ENCODE measurements at regions of chr7 and their contacts with region 1.

Region 1: DNA sequence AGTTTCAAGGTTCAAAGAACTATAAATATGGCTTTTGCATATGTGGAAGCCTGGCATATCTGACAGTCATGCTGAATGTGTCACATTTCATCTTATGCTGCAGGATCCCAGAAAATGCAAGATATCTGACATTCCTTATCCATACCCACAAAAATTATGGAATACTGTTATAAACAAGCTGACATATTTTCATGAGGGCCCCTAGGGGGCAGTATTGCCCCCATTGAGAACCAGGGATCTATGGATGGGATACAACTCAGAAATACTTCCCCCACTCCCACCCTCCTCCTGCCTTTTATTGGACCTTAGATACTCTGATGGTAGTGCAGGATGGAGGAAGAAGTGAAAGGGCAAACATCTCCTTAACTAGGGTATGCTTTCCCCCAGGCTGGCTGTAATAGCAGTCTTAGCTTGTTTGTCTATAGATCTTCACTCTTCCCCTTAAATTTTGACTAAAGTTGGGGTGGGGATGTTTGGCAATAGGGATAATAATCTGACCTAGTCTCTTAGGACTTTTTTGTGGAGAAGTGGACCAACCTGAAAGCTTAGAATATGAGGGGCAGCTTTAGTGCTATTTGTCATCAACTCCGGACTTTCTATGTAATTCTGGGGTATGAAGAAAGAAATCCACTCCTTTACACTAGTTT is 3.5 kb upstream of the GNGT1 start:
- DNase-seq: peak in 1 of 5 donors; percentile 51
- H3K4me3 ChIP-seq: no peak overlapping the region
- H3K27ac ChIP-seq: no peak overlapping the region
- H3K4me1 ChIP-seq: no peaks in the 10 kb centered on the region
- H3K27me3 ChIP-seq: no peaks in the 10 kb centered on the region
- CTCF ChIP-seq: peak; percentile 44 to 57 (median 53)
- EP300 ChIP-seq: no peak
- POLR2A ChIP-seq: no peak

Region 2: DNA sequence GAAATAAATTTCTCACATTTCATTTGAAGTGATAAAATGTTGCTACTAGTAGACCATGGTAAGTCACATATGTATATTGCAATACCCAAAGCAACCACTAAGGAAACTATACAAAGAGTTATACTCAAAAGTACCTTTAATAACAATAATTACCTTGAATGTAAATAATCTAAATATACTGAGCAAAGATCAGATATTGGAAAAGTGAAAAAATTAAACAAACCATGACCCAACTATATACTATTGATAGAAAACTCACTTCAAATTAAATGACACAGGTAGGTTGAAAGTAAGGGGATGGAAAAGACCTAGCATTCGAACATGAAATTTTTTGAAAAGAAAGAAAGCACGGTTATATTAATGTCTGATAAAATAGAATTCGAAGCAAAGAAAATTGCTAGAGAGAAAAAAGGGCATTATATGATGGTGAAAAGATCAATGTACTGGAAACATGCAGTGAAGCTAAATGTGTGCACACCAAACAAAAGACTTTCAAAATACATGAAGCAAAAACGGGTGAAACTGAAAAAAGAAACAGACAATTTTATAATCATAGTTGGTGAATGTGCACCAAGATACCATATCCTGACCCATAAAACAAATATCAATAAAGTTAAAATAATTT is 41.5 kb before region 1 on chr7:
- intact Hi-C with region 1: no loop called
- DNase-seq: no peak
- H3K4me3 ChIP-seq: no peak overlapping the region
- H3K27ac ChIP-seq: no peak overlapping the region
- H3K4me1 ChIP-seq: no peaks in the 10 kb centered on the region
- H3K27me3 ChIP-seq: no peaks in the 10 kb centered on the region
- CTCF ChIP-seq: no peak
- EP300 ChIP-seq: no peak
- POLR2A ChIP-seq: no peak

Region 3: DNA sequence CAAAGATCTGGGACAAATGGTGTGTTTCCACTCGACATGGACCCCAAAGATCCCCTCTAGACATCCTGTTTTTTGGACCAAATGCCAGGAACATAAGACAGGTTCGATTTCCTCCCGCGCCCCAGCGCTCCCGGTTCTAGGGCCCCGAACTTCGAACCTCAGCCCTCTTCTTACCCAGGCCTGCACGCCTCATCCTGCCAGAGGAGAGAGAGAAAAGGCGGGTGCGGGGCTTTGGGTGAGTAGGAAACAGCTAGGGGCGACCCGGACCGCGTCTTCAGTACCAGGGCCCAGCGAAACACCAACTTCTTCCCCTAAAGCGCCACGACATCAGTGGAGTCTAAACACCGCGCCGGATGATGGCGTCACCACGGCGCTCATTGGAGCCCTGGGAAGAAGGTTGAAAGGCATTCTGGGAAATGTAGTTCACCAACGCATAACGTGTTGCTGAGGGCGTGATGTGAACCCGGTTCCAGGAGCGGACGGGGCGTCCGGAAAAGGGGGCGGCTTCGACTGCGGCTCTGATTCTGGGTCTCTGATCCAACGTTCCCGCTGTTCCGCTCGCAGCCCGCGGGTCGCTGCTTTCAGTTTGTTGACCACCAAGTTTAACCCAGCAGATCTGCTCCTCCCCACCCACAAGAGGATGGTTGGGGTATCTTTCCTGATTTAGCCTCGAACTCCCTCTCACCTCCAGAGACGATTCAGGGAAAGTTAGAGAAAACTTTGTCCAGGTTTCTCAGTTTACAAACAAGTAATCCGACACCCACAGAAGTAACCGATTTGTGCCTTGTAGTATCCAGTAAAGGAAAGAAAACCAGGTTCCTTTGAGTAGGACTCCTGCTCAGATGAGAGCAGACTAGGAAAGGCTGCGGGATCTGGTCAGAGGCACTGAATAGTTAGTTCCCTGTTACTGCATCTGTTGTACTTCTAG is 101.4 kb after region 1 on chr7 and contains the start of gene BET1:
- intact Hi-C with region 1: loop called in 1 of 4 experiments (anchors 10 kb)
- DNase-seq: peak; percentile 93 to 96 (median 94)
- H3K4me3 ChIP-seq: peak within 1 kb of the TSS; percentile 73
- H3K27ac ChIP-seq: peak within 1 kb of the TSS; percentile 56 to 77
- H3K4me1 ChIP-seq: peaks cover 2% of the 10 kb centered on the region
- H3K27me3 ChIP-seq: no peaks in the 10 kb centered on the region
- CTCF ChIP-seq: peak in 1 of 3 donors; percentile 9
- EP300 ChIP-seq: no peak
- POLR2A ChIP-seq: peak; percentile 91
- total RNA-seq, gene BET1: 22.9 to 32.1 (median 26.9) TPM

Region 4: GRCh38 chr7:94087664-94088352 is 184.9 kb after region 1 on chr7:
- intact Hi-C with region 1: loop called in 2 of 4 experiments (anchors 5 to 10 kb)
- DNase-seq: peak in 3 of 5 donors; percentile 20 to 52 (median 26)
- H3K4me3 ChIP-seq: no peak overlapping the region
- H3K27ac ChIP-seq: no peak overlapping the region
- H3K4me1 ChIP-seq: peaks cover 3% of the 10 kb centered on the region
- H3K27me3 ChIP-seq: no peaks in the 10 kb centered on the region
- CTCF ChIP-seq: peak; percentile 55 to 77 (median 64)
- EP300 ChIP-seq: no peak
- POLR2A ChIP-seq: no peak